Activated CD4-positive, alpha-beta memory T cell treated with anti-CD3 and anti-CD28 coated beads, Interleukin-2, amount 10 ng/mL, durations not matched to agents 7 days and 5 days (primary cell): ENCODE measurements at regions of chr6 and their contacts with region 1.

Region 1: DNA sequence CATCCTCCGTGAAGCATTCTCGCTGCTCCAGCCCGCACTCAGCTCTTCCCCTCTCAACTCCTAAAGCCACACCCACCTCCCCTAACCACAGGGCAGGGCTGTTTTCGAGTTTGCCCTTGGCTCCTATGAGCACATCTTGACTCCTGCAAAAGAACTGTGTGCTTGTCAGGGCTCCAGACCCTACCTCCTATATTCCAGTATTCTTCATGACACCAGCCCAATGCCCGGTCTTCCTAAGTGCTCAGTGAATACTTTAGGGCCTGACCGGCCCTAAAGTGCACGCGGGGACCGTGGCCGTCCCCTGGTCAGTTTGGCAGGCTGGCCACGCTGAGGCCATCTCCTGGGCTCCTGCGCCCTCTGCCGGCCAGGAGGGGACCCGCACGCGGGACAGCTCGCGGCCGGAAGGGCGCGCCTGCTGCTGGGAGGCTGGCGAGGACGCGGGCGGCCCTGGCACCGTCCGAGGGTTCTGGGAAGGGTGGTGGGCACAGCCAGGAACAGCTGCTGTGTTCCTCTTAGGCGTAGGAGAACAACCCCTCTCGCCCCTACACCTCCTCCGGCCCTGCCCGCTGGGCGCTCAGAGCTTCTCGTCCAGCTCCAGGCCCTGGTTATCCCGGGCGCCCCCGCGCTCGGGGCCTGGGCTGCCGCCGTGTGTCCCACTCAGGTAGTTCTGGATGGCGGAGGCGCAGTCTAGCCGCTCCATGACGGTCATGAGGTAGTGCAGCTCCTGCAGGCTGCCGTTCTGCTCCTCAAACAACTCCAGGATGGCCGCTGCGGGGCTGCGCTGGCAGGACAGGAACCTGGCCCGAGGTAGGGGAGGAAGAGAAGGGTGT is 11.0 kb downstream of the UNC5CL start:
- DNase-seq: peak; percentile 84
- H3K4me3 Mint-ChIP-seq: peak overlapping the region; percentile 77
- H3K27ac Mint-ChIP-seq: peak overlapping the region; percentile 77
- H3K4me1 Mint-ChIP-seq: peaks cover 24% of the 10 kb centered on the region
- H3K27me3 Mint-ChIP-seq: no peaks in the 10 kb centered on the region

Region 2: GRCh38 chr6:41008011-41008410 is 20.0 kb before region 1 on chr6:
- CTCF ChIA-PET with region 1: interaction called, 26 read pairs
- POLR2A ChIA-PET with region 1: interaction called, 7 read pairs
- DNase-seq: no peak
- H3K4me3 Mint-ChIP-seq: no peak overlapping the region
- H3K27ac Mint-ChIP-seq: no peak overlapping the region
- H3K4me1 Mint-ChIP-seq: peaks cover 3% of the 10 kb centered on the region
- H3K27me3 Mint-ChIP-seq: peaks cover 26% of the 10 kb centered on the region

Region 3: GRCh38 chr6:41039060-41039998 is 11.3 kb after region 1 on chr6 and contains the start of gene UNC5CL:
- CTCF ChIA-PET with region 1: interaction called, 68 read pairs
- POLR2A ChIA-PET with region 1: interaction called, 18 read pairs
- DNase-seq: peak; percentile 67
- H3K4me3 Mint-ChIP-seq: no peak within 1 kb of the TSS
- H3K27ac Mint-ChIP-seq: no peak within 1 kb of the TSS
- H3K4me1 Mint-ChIP-seq: peaks cover 7% of the 10 kb centered on the region
- H3K27me3 Mint-ChIP-seq: no peaks in the 10 kb centered on the region
- total RNA-seq, gene UNC5CL: 1.6 to 2.3 TPM

Region 4: DNA sequence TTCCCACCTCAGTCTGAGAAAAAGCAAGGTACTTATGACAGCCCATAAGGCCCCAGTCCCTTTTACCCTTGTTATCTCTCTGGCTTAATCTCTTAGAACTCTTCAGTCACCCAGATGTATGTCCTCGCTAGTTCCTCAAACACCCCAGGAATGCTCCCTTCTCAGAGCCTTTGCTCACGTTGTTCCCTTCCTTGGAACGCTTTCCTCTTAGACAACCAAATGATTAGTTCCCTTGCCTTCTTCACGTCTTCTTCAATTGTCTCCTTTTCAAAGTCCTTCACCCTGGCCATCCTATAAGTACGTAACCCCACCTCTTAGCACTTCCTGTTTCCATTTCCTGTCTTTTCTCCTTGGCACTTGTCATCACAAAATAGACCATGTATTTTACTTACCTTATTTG is 23.9 kb after region 1 on chr6:
- CTCF ChIA-PET with region 1: interaction called, 38 read pairs
- POLR2A ChIA-PET with region 1: interaction called, 15 read pairs
- DNase-seq: no peak
- H3K4me3 Mint-ChIP-seq: no peak overlapping the region
- H3K27ac Mint-ChIP-seq: peak overlapping the region; percentile 71
- H3K4me1 Mint-ChIP-seq: peaks cover 17% of the 10 kb centered on the region
- H3K27me3 Mint-ChIP-seq: no peaks in the 10 kb centered on the region

Region 5: DNA sequence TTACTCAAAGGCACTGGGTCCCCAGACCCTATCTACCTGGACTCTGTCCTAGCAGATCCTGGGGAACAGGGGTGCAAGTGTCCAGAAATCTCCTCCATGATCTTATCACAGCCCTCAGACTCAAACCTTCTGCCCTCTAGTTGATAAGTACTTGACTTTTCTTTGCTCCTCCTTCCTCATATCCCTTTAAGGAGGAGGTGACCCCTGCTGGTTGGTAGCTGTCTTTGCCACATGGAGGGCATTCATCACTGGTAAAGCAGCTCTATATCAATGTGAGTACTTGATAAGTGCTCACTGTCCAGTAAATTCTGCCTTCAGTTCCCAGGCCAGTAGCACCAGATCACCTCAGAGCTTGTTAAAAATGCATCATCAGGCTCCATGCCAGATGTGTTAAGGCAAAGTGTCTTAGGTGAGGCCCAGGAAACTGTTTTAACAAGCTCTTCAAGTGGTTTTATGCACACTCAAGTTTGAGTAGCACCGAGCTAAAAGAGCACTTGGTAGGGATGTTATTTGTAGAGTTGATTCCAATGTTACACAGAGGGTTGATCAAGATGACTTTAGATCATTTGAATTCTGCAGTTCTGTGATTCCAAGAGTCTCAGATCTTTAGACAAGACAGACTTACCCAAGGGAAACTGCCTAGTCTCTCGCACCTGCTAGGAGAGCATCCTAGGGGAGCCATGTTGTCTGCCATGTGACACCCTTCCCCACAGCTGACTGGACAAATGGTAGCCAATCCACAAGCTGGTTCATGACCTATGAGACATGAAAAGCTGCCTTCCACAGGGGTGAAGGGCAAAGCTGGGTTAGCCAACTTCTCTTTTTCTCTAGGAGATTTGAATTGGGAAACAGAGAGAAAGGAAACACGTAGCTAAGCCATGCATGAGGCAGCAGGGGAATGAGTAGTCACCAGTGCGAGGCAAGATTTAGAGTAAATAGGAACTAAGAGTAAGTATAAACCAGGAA is 154.3 kb after region 1 on chr6:
- CTCF ChIA-PET with region 1: interaction called, 11 read pairs
- POLR2A ChIA-PET with region 1: no interaction called
- DNase-seq: peak; percentile 68
- H3K4me3 Mint-ChIP-seq: no peak overlapping the region
- H3K27ac Mint-ChIP-seq: no peak overlapping the region
- H3K4me1 Mint-ChIP-seq: peaks cover 33% of the 10 kb centered on the region
- H3K27me3 Mint-ChIP-seq: peaks cover 11% of the 10 kb centered on the region